GM10248 (cell line): ENCODE measurements at regions of chr3 and their contacts with region 1.

Region 1: DNA sequence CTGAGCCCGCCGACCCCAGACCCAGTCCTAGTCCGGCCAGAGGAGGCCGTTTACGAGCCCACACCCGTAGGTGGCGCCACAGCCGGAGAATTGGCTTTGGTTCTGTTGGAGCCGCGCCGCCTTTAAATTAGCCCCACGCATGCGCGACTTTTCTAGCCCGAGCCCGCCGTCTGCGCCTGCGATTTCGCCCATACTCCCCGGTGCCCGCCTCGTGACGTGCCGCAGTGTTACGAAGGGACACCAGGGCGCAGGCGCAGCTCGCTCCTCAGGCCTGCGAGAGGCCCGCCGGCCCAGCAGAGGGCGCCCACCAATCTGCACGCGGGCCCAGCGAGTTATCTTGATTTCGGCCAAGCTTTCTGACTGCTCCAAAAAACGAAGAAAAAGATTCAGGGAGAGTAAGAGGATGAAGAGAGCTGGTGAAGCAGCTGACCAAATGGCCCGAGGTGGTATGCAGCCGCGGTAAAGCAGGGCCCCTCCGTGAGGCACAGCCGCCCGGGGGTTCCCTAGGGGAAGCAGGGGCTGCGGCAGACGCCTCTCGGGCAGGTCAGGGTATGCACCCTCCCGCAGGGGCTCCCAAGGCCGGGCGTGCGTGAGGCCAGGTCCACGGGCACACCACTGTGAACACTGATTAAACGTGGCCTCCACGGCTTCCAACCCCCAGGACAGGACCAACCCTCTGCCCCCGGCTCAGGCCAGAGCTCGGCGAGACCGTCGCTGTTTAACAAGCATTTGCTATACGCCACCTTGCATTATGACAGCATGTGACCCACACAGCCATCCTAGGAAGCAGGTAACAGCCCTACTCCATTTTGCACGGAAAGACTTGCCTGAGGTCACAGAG is 32.8 kb downstream of the RPN1 start:
- DNase-seq: peak; percentile 100
- CTCF ChIP-seq: peak; percentile 94

Region 2: GRCh38 chr3:128432971-128433704 is 184.6 kb before region 1 on chr3:
- CTCF ChIA-PET with region 1: no interaction called
- POLR2A ChIA-PET with region 1: no interaction called
- DNase-seq: no peak
- CTCF ChIP-seq: no peak

Region 3: DNA sequence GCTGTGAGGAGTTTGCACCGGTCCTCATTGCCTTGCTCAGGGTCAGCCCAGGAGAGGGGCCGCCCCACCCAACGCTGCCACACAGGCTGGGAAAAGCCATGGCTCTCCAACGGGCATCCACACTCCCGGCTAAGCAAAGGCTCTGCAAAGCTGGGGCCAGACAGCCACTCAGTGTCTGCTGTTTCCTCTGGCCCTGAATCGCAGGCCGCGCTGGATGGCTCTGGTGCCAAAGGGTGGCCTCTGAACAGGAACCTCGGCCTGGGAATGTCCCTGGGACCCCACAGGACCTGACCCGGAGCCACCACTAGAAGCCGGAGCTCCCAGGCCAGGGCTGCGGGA is 10.1 kb before region 1 on chr3:
- CTCF ChIA-PET with region 1: interaction called, 40 read pairs
- POLR2A ChIA-PET with region 1: no interaction called
- DNase-seq: no peak
- CTCF ChIP-seq: no peak

Region 4: GRCh38 chr3:128629936-128630335 is 12.2 kb after region 1 on chr3:
- CTCF ChIA-PET with region 1: interaction called, 22 read pairs
- POLR2A ChIA-PET with region 1: no interaction called
- DNase-seq: no peak
- CTCF ChIP-seq: no peak